PC-3 (cell line): ENCODE measurements at regions of chr7 and their contacts with region 1.

Region 1: GRCh38 chr7:102874166-102874829 is 38.5 kb upstream of the LRRC17 start:
- DNase-seq: peak; percentile 89
- ATAC-seq: peak; percentile 65
- H3K4me3 ChIP-seq: no peak overlapping the region
- H3K27ac ChIP-seq: peak overlapping the region; percentile 92
- H3K4me1 ChIP-seq: peaks cover 52% of the 10 kb centered on the region
- H3K27me3 ChIP-seq: no peaks in the 10 kb centered on the region
- CTCF ChIP-seq: no peak

Region 2: GRCh38 chr7:102834999-102835398 is 39.3 kb before region 1 on chr7:
- CTCF ChIA-PET with region 1: no interaction called
- POLR2A ChIA-PET with region 1: no interaction called
- intact Hi-C with region 1: loop called (anchors 5 kb)
- DNase-seq: peak; percentile 81
- ATAC-seq: peak; percentile 87
- H3K4me3 ChIP-seq: peak overlapping the region; percentile 41; the same call in 1 of the 2 replicates
- H3K27ac ChIP-seq: peak overlapping the region; percentile 58
- H3K4me1 ChIP-seq: peaks cover 34% of the 10 kb centered on the region
- H3K27me3 ChIP-seq: no peaks in the 10 kb centered on the region
- CTCF ChIP-seq: no peak

Region 3: DNA sequence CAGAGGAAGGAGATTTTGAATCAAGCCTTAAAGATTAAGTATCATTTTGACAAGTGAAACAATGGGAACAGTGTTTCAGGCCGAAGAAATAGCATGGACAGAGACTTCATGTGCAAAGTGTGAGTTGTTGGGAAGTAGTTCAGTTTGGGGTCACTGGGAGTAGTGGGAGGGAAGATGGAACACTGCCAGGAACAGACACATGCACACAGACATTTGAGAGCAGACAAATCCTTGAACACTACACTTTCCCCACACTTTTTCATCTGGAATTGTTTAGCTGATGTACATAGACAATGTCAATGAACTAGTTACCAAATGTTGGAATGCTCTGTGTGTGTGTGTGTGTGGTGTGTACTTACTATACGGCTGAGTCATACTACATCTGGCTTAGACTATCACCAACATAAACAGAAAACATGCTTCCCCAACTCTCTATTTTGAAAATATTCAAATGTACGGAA is 13.9 kb before region 1 on chr7:
- CTCF ChIA-PET with region 1: no interaction called
- POLR2A ChIA-PET with region 1: no interaction called
- intact Hi-C with region 1: loop called (anchors 1 kb)
- DNase-seq: peak; percentile 43
- ATAC-seq: peak; percentile 47
- H3K4me3 ChIP-seq: no peak overlapping the region
- H3K27ac ChIP-seq: no peak overlapping the region
- H3K4me1 ChIP-seq: peaks cover 34% of the 10 kb centered on the region
- H3K27me3 ChIP-seq: no peaks in the 10 kb centered on the region
- CTCF ChIP-seq: no peak

Region 4: GRCh38 chr7:102991540-102992214 is 117.4 kb after region 1 on chr7:
- CTCF ChIA-PET with region 1: no interaction called
- POLR2A ChIA-PET with region 1: no interaction called
- intact Hi-C with region 1: loop called (anchors 1 kb)
- DNase-seq: peak; percentile 93
- ATAC-seq: peak; percentile 96
- H3K4me3 ChIP-seq: no peak overlapping the region; the same call in 1 of the 2 replicates
- H3K27ac ChIP-seq: peak overlapping the region; percentile 86
- H3K4me1 ChIP-seq: peaks cover 40% of the 10 kb centered on the region
- H3K27me3 ChIP-seq: no peaks in the 10 kb centered on the region
- CTCF ChIP-seq: no peak

Region 5: DNA sequence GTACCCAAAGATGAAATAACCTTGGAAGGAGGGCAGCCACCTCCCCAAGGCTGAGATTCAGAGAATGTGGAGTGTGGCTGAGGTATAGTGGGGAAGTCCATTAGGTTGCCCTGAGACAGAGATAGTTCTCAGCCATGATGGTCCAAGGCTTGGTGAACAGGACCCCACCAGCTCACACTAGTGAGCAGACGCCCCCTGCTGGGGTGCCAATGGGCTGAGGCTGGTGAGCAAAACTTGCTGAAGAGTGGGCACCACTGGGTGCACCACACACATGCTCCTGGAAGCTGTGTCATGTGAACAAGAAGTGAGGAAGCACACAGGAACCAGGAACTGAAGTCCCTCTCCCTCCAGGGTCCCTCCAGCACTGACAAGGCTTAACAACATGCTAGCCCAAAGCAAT is 191.4 kb after region 1 on chr7:
- CTCF ChIA-PET with region 1: interaction called, 15 read pairs
- POLR2A ChIA-PET with region 1: no interaction called
- intact Hi-C with region 1: no loop called
- DNase-seq: peak; percentile 62
- ATAC-seq: peak; percentile 69
- H3K4me3 ChIP-seq: no peak overlapping the region
- H3K27ac ChIP-seq: no peak overlapping the region
- H3K4me1 ChIP-seq: peaks cover 6% of the 10 kb centered on the region; the same call in 1 of the 2 replicates
- H3K27me3 ChIP-seq: no peaks in the 10 kb centered on the region
- CTCF ChIP-seq: peak; percentile 74